Naive thymus-derived CD4-positive, alpha-beta T cell (primary cell): ENCODE measurements at regions of chr10 and their contacts with region 1.

Region 1: DNA sequence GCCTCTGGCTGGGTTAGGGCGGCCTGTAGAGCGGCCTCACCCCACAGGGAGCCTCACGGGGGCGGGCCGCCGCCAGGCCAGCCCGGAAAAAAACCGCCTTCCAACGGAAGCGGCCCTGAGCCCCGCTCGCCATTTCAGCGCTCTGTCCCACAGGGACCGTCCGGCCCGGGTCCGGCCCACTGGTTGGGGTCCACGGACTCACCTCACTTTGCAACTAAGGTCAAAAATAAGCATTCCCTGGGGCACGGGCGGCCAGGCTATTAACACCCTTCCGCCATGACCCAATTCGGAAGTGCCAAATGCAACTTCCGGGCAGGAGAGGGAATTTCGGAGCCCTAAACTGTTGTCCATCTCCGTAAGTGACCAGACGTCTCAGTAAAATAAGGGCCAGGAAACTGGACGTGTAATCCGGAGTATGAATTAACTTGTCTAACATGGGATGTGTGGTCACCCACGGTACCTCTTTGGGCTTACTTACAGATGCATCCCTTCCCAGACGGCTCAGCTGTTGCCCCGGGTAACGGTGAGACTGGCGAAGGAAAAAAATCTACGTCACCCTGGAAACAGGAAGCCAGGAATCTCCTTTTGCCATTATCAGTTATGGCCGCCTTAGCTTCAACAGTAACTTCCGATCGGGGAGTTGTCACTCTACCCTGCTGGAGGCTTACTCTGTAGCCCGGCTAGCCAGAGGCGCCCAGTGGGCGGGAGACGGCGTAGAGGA is at the start of gene BBIP1:
- DNase-seq: peak in 4 of 9 donors; percentile 70 to 98 (median 90)
- ATAC-seq: peak; percentile 96
- H3K4me3 ChIP-seq: peak within 1 kb of the TSS; percentile 97
- H3K4me3 Mint-ChIP-seq: peak within 1 kb of the TSS; percentile 86 to 100 (median 98)
- H3K27ac ChIP-seq: peak within 1 kb of the TSS; percentile 100
- H3K27ac Mint-ChIP-seq: peak within 1 kb of the TSS; percentile 97 to 100 (median 99)
- H3K4me1 ChIP-seq: peaks cover 7 to 17% of the 10 kb centered on the region in 2 donors
- H3K4me1 Mint-ChIP-seq: peaks cover 24 to 66% (median 59%) of the 10 kb centered on the region in 7 donors
- H3K27me3 ChIP-seq: no peaks in the 10 kb centered on the region
- H3K27me3 Mint-ChIP-seq: no peaks in the 10 kb centered on the region
- total RNA-seq, gene BBIP1: 22.2 to 64.2 (median 44.6) TPM

Region 2: DNA sequence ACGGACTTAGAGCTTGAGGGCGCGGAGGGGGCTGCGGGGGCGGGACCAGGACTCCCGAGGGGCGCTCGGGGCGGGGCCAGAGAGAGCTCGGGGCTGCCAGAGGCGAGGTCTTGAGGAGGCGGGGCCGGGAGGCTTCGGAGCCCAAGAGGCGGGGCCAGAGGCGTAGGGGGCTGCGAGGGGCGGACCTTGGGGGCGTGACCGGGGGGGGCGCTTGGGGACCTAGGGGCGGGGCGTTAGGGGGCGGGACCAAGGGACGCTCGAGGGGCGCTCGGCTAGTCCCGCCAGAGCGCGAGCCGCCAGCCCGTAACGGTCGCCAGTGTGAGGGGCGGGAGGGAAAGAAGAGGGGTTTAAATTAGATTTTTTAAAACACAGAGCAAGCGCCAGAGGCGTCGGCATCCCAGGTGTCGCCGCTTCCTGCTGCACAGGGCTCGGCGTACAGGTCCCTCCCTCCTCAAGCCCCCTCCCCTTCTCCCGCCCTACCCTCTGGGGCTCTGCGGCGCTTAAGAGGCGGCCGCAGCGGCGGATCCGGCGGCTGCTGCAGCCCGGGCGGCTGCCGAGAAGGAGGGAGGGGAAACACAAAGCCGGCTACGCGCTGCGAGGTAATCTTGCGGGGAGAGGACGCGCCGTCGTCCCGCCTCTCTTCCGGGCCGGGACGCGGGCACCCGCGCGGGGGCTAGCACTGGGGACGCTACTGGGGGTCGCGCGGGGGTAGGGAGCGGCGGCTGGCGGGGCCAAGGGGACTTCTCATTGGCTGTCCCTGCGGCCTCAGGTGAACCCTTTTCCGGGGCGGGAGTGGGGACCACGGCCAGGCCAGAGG is 910.9 kb before region 1 on chr10 and contains the start of gene ADD3:
- CTCF ChIA-PET with region 1: no interaction called
- POLR2A ChIA-PET with region 1: no interaction called
- intact Hi-C with region 1: loop called (anchors 1 kb)
- DNase-seq: peak; percentile 82 to 93 (median 90)
- ATAC-seq: peak; percentile 86
- H3K4me3 ChIP-seq: peak within 1 kb of the TSS; percentile 66
- H3K4me3 Mint-ChIP-seq: peak within 1 kb of the TSS in 2 of 10 donors; percentile 99 to 100
- H3K27ac ChIP-seq: peak within 1 kb of the TSS; percentile 88
- H3K27ac Mint-ChIP-seq: peak within 1 kb of the TSS in 7 of 9 donors; percentile 91 to 98 (median 94)
- H3K4me1 ChIP-seq: peaks cover 33 to 36% of the 10 kb centered on the region in 2 donors
- H3K4me1 Mint-ChIP-seq: peaks cover 28 to 54% (median 44%) of the 10 kb centered on the region in 7 donors
- H3K27me3 ChIP-seq: no peaks in the 10 kb centered on the region
- H3K27me3 Mint-ChIP-seq: peaks cover 0 to 6% (median 0%) of the 10 kb centered on the region in 5 donors
- total RNA-seq, gene ADD3: 281 to 463 (median 342) TPM

Region 3: DNA sequence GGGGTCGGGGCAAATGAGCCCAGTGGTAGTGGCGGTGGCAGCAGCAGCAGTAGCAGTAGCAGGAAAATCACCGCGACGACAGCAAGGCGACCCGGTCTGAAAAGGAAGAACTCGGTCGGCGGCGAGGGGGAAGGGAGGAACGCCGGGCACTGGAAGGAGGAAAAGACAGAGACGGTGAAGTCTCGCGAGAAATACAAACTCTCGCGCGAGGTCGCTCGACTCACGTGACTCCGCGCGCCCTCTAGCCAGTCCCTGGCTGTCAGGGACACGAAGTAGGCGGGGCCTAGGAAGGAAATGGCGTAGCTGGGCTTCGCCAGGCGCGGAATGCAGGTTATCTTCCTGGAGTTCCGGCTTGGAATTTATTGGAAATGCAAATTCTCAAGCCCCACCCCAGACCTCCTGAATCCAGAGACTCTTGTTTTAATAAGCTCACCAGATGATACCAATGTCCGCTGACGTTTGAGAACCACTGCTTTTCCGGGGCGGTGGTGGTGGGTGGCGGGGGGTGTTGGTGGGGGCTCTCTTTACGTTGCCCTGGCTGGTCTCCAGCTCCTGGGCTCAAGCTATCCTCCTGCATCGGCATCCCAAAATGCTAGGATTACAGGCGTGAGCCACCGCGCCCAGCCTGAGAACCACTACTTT is 613.9 kb before region 1 on chr10 and contains the start of gene SMNDC1:
- CTCF ChIA-PET with region 1: no interaction called
- POLR2A ChIA-PET with region 1: interaction called, 3 read pairs
- intact Hi-C with region 1: loop called (anchors 1 kb)
- DNase-seq: peak; percentile 93 to 97 (median 96)
- ATAC-seq: peak; percentile 94
- H3K4me3 ChIP-seq: peak within 1 kb of the TSS; percentile 91
- H3K4me3 Mint-ChIP-seq: peak within 1 kb of the TSS; percentile 94 to 99 (median 98)
- H3K27ac ChIP-seq: peak within 1 kb of the TSS; percentile 89
- H3K27ac Mint-ChIP-seq: peak within 1 kb of the TSS; percentile 97 to 100 (median 100)
- H3K4me1 ChIP-seq: peaks cover 32 to 38% of the 10 kb centered on the region in 2 donors
- H3K4me1 Mint-ChIP-seq: peaks cover 26 to 61% (median 55%) of the 10 kb centered on the region in 7 donors
- H3K27me3 ChIP-seq: no peaks in the 10 kb centered on the region
- H3K27me3 Mint-ChIP-seq: no peaks in the 10 kb centered on the region
- total RNA-seq, gene SMNDC1: 34.4 to 43.1 (median 40.1) TPM

Region 4: GRCh38 chr10:110567201-110568054 is 351.4 kb before region 1 on chr10 and contains the start of gene SMC3:
- CTCF ChIA-PET with region 1: no interaction called
- POLR2A ChIA-PET with region 1: no interaction called
- intact Hi-C with region 1: loop called (anchors 1 kb)
- DNase-seq: peak; percentile 82 to 96 (median 94)
- ATAC-seq: peak; percentile 94
- H3K4me3 ChIP-seq: peak within 1 kb of the TSS; percentile 88
- H3K4me3 Mint-ChIP-seq: peak within 1 kb of the TSS; percentile 91 to 99 (median 96)
- H3K27ac ChIP-seq: peak within 1 kb of the TSS; percentile 88
- H3K27ac Mint-ChIP-seq: peak within 1 kb of the TSS; percentile 96 to 99 (median 97)
- H3K4me1 ChIP-seq: peaks cover 20 to 21% of the 10 kb centered on the region in 2 donors
- H3K4me1 Mint-ChIP-seq: peaks cover 21 to 45% (median 38%) of the 10 kb centered on the region in 7 donors
- H3K27me3 ChIP-seq: no peaks in the 10 kb centered on the region
- H3K27me3 Mint-ChIP-seq: peaks cover 6 to 26% (median 14%) of the 10 kb centered on the region in 5 donors
- total RNA-seq, gene SMC3: 29.8 to 69.8 (median 48.5) TPM

Region 5: DNA sequence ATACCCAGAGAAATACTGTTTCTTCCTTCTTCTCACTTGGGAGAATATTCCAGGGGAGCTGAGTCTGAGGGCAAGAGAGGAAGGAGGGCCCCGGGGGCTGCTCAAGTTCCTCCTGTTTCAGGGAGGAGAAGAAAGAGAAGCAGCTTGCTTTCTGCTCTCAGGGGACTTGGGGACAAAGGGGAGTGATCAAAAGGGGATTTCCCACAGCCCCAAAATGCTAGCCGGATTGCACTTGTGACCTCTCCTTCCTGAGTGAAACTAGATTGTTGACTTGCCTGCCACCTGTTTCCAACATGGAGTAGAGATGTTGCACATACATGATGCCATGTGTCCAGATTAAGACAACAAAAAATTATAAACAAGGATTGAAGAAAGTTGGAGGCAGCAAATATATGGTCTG is 75.8 kb before region 1 on chr10:
- CTCF ChIA-PET with region 1: no interaction called
- POLR2A ChIA-PET with region 1: no interaction called
- intact Hi-C with region 1: loop called in 1 of 2 experiments (anchors 2 kb)
- DNase-seq: peak in 7 of 9 donors; percentile 35 to 60 (median 46)
- ATAC-seq: peak; percentile 88
- H3K4me3 ChIP-seq: no peak overlapping the region
- H3K4me3 Mint-ChIP-seq: peak overlapping the region in 8 of 10 donors; percentile 1 to 67 (median 42)
- H3K27ac ChIP-seq: peak overlapping the region; percentile 40
- H3K27ac Mint-ChIP-seq: peak overlapping the region; percentile 79 to 98 (median 89)
- H3K4me1 ChIP-seq: peaks cover 22 to 27% of the 10 kb centered on the region in 2 donors
- H3K4me1 Mint-ChIP-seq: peaks cover 36 to 67% (median 54%) of the 10 kb centered on the region in 7 donors
- H3K27me3 ChIP-seq: no peaks in the 10 kb centered on the region
- H3K27me3 Mint-ChIP-seq: no peaks in the 10 kb centered on the region

Region 6: DNA sequence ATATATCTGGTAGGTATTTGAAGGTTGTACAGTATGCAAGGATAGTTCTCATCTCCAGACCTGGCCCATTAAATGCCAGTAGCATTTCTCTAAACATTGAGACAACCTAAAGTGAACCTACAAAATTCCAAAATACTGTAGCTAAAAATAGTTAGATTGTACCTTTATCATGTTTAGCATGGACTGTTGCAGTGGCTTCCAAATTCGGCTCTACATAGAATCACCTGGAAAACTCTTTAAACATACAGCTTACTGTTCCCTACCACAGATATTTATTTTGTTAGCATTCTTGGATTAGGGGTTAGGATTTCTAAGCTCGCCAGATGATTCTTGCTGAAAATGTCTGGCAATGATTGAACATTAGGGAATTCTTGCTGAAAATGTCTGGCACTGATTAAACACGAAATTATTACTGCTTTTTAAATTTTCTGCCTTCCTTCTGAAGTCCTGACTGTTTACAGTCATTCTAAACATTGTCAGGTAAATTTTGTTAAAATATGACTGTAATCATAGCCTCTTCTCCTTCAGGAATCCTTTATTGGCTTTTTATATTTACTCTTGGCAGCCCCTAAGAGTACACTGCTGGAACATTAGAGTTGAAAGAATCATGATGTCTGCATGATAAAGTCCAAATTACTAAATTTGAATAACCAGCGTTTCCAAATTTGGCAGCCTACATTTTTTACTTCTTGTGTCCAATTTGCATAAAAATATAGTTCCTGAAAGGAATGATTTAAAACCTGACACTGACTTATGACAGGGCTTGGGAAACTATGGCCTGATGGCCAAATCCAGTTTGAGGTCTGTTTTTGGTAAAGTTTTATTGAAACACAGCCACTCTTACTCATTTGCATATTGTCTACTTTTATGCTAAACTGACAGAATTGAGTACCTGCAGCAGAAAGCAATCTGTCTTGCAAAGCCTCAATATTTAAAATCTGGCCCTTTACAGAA is 40.9 kb after region 1 on chr10:
- CTCF ChIA-PET with region 1: no interaction called
- POLR2A ChIA-PET with region 1: no interaction called
- intact Hi-C with region 1: loop called in 1 of 2 experiments (anchors 5 kb)
- DNase-seq: no peak
- ATAC-seq: no peak
- H3K4me3 ChIP-seq: no peak overlapping the region
- H3K4me3 Mint-ChIP-seq: no peak overlapping the region
- H3K27ac ChIP-seq: no peak overlapping the region
- H3K27ac Mint-ChIP-seq: no peak overlapping the region
- H3K4me1 ChIP-seq: peaks cover 0 to under 1% of the 10 kb centered on the region in 2 donors
- H3K4me1 Mint-ChIP-seq: peaks cover 8 to 86% (median 70%) of the 10 kb centered on the region in 7 donors
- H3K27me3 ChIP-seq: no peaks in the 10 kb centered on the region
- H3K27me3 Mint-ChIP-seq: no peaks in the 10 kb centered on the region

Region 7: DNA sequence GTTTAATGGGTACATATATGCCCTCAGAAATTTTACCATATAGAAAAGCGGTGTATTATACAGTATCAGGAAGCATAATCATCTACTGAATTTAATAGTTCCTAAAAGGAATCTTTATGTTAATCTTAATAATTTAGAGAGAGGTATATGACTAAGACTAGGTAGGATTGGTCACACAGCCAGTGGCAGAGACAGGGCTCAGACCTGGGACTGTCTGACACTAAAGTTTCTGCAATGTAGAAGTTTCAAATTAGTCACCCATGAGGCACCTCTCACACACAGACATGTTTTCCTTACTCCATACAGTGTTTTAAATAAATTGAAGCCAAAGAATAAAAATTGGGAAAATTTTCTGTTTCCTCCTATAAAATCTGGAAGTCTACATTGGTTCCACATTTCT is 85.2 kb after region 1 on chr10:
- CTCF ChIA-PET with region 1: no interaction called
- POLR2A ChIA-PET with region 1: no interaction called
- intact Hi-C with region 1: no loop called
- DNase-seq: no peak
- ATAC-seq: no peak
- H3K4me3 ChIP-seq: no peak overlapping the region
- H3K4me3 Mint-ChIP-seq: no peak overlapping the region
- H3K27ac ChIP-seq: no peak overlapping the region
- H3K27ac Mint-ChIP-seq: no peak overlapping the region
- H3K4me1 ChIP-seq: no peaks in the 10 kb centered on the region
- H3K4me1 Mint-ChIP-seq: peaks cover 0 to 5% (median 0%) of the 10 kb centered on the region in 7 donors
- H3K27me3 ChIP-seq: no peaks in the 10 kb centered on the region
- H3K27me3 Mint-ChIP-seq: no peaks in the 10 kb centered on the region

Region 8: DNA sequence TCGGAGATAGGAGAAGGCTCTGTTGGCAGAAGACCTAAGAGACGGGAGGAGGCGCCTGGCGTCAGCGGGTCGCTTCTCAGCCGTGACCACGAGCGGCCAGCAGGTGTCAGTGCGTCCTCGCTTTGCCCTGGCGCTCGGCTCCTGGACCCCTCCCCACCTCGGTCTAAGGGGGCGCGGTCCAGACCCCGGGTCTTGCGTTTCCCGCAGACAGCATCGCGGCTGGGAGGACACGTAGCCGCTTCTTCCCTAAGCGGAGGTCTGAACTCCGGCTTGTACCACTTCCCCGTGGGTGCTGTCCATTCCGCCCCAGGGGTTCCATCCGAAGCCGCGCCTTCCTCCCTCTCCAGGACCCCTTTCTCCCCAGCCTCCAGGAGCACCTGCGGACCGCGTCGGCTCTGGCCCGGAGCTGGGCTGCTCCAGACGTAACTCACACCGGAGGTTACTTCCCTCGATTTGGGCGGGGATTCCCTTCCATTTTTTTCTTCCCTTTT is 157.4 kb after region 1 on chr10:
- CTCF ChIA-PET with region 1: no interaction called
- POLR2A ChIA-PET with region 1: no interaction called
- intact Hi-C with region 1: loop called in 1 of 2 experiments (anchors 2 kb)
- DNase-seq: peak in 6 of 9 donors; percentile 17 to 57 (median 30)
- ATAC-seq: peak; percentile 68
- H3K4me3 ChIP-seq: peak overlapping the region; percentile 44
- H3K4me3 Mint-ChIP-seq: peak overlapping the region; percentile 24 to 85 (median 66)
- H3K27ac ChIP-seq: no peak overlapping the region
- H3K27ac Mint-ChIP-seq: no peak overlapping the region
- H3K4me1 ChIP-seq: peaks cover 0 to 13% of the 10 kb centered on the region in 2 donors
- H3K4me1 Mint-ChIP-seq: peaks cover 5 to 20% (median 10%) of the 10 kb centered on the region in 7 donors
- H3K27me3 ChIP-seq: peaks cover 0 to 21% of the 10 kb centered on the region in 2 donors
- H3K27me3 Mint-ChIP-seq: peaks cover 57 to 76% (median 64%) of the 10 kb centered on the region in 5 donors

Region 9: DNA sequence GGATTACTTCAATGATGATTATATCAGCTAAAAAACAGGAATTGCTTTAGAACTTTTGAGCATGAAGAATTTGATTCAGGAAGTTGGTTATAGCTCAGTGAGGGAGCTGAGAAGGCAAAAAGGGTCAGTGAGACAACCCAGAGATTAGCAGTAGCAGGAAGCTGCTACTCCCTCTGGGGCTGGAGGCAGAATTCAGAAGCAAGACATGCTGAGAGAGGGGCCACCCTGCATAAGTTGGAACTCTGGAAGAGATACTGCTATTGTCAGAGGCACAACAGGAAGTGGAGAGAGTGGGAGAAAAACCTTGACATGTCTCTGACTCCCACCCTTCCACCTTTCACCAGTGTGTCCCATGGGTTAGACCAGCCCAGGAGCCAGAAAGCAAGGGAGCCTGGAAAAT is 646.7 kb after region 1 on chr10:
- CTCF ChIA-PET with region 1: no interaction called
- POLR2A ChIA-PET with region 1: no interaction called
- intact Hi-C with region 1: no loop called
- DNase-seq: no peak
- ATAC-seq: no peak
- H3K4me3 ChIP-seq: no peak overlapping the region
- H3K4me3 Mint-ChIP-seq: no peak overlapping the region
- H3K27ac ChIP-seq: no peak overlapping the region
- H3K27ac Mint-ChIP-seq: no peak overlapping the region
- H3K4me1 ChIP-seq: no peaks in the 10 kb centered on the region
- H3K4me1 Mint-ChIP-seq: peaks cover 0 to 1% (median 0%) of the 10 kb centered on the region in 7 donors
- H3K27me3 ChIP-seq: no peaks in the 10 kb centered on the region
- H3K27me3 Mint-ChIP-seq: peaks cover 0 to 47% (median 3%) of the 10 kb centered on the region in 5 donors